SK-N-SH (cell line): ENCODE measurements at regions of chr12 and their contacts with region 1.

Region 1: DNA sequence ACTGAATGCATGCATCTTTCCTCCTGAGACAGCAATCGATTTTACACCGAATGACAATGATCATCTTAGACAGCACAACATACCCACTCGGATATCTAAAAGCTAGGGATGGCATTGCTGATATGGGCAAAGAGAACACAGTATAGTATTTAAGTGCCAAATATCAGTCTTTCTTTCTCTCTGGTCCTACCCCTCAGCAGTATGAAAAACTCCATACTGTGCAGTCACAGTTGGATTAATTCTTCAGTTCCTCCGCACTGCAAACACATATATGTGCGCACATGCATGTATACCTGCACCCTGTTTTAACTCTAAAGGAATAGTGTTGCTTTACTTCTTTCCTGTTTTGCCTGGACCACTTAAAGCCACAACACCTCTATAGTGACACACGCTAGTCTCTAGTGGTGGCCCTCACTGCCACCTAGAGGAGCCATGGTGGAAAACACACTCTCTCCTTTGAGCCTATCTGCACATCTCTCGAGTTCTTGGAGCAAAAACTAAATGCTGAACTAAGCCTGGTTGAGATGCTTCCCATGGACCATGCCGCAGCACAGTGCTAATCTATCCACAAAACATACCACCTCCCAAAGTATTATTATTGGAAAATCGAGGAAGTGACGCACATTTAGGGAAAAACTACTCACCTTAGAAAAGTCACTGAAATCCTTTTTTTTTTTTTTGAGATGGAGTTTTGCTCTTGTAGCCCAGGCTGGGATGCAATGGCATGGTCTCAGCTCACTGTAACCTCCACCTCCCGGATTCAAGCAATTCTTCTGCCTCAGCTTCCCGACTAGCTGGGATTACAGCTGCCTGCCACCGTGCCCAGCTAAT is 11.9 kb downstream of the TMEM52B start:
- DNase-seq: peak; percentile 60
- H3K4me3 ChIP-seq: no peak overlapping the region
- H3K27ac ChIP-seq: no peak overlapping the region
- H3K4me1 ChIP-seq: no peaks in the 10 kb centered on the region
- H3K27me3 ChIP-seq: peaks cover 29% of the 10 kb centered on the region; the same call in 1 of the 2 replicates
- CTCF ChIP-seq: peak; percentile 69
- EP300 ChIP-seq: no peak
- RAD21 ChIP-seq: peak; percentile 72

Region 2: DNA sequence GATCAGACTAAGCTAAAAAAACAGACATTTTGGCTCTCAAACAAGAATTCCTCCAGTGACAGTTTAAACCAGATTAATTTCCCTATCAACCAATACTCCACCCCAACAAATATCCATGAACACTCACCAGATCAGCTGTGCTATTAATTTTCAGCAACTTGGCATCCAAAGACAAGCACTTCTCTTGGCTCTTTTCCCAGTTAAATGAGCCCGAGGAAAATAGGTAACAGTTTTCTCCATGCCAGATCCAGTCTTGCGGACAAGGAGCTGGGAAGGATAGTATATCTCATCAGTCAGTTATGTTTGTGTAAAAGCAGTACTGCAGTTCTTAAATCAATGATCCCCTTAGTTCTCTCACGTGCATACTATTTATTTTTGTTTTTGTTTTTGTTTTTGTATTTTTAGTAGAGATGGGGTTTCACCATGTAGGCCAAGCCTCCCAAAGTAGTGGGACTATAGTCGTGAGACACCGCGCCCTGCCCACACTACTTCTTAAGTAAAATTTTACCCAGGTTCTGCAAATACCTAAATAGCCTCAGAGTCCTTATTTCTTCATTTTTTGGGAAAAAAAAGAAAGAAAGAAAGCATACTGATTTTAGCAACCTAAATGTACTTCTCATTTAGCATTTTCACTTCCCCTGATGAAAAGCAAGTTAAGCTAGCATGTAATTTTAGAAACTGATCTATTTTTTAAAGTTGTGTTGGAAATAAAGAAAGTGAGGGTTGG is 30.0 kb before region 1 on chr12:
- CTCF ChIA-PET with region 1: interaction called, 48 read pairs
- POLR2A ChIA-PET with region 1: no interaction called
- DNase-seq: no peak
- H3K4me3 ChIP-seq: no peak overlapping the region
- H3K27ac ChIP-seq: no peak overlapping the region
- H3K4me1 ChIP-seq: no peaks in the 10 kb centered on the region
- H3K27me3 ChIP-seq: peaks cover 12% of the 10 kb centered on the region; the same call in 1 of the 2 replicates
- CTCF ChIP-seq: no peak
- EP300 ChIP-seq: no peak
- RAD21 ChIP-seq: no peak